Ovary (tissue), 10 donors: ENCODE measurements at regions of chr9 and their contacts with region 1.

Region 1: DNA sequence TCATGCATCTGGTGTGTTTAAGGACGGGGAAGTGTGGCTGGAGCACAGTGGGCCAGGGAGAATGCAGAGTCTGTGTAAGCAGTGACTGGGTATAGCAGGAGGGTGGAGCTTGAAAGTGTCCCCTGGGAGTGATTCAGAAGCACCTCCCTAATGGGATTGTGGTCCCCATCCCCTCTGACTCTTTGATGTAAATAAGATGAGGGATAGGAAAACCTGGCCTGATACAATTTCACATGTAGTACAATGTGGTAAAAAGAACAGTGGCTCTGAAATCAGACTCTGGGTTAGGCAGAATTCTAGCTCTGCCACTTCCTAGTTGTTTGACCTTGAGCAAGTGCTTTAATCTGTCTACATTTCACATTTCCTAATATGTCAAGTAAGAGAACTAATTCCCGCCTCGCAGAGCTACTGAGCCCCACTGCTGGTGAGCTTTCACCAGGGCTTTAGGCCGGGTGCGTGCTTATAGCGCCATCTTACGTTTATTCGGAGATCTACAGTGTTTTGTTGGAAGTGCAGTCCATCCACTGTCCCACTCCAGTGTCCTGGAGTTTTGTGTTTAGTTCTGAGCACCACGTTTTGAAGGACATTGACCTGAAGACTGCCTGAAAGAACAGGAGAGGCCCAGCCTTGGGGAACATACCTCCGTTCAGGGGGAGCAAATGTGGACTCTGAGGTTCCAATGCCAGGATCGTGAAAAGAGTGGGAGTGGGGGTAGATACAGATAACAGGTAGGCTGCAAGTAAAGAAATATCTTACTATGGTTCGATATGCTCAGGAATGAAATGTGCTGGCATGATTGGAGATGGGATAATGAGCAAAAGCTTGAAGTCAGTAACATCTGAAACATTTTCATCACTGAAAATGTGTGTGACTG is 51.2 kb upstream of the TESK1 start:
- DNase-seq: peak; percentile 67 to 84 (median 75)
- H3K4me3 ChIP-seq: no peak overlapping the region
- H3K27ac ChIP-seq: peak overlapping the region in 1 of 2 donors; percentile 55
- H3K4me1 ChIP-seq: peaks cover 3% of the 10 kb centered on the region
- H3K27me3 ChIP-seq: no peaks in the 10 kb centered on the region
- CTCF ChIP-seq: peak; percentile 82 to 92 (median 89)
- EP300 ChIP-seq: no peak
- POLR2A ChIP-seq: no peak

Region 2: GRCh38 chr9:35476596-35476995 is 77.3 kb before region 1 on chr9:
- intact Hi-C with region 1: loop called in 1 of 4 experiments (anchors 5 kb)
- DNase-seq: no peak
- H3K4me3 ChIP-seq: no peak overlapping the region
- H3K27ac ChIP-seq: no peak overlapping the region
- H3K4me1 ChIP-seq: no peaks in the 10 kb centered on the region
- H3K27me3 ChIP-seq: no peaks in the 10 kb centered on the region
- CTCF ChIP-seq: no peak
- EP300 ChIP-seq: no peak
- POLR2A ChIP-seq: no peak

Region 3: GRCh38 chr9:35489313-35490154 is 64.4 kb before region 1 on chr9 and contains the start of gene RUSC2:
- intact Hi-C with region 1: loop called in 3 of 4 experiments (anchors 2 to 5 kb)
- DNase-seq: peak; percentile 86 to 92 (median 90)
- H3K4me3 ChIP-seq: peak within 1 kb of the TSS; percentile 62
- H3K27ac ChIP-seq: peak within 1 kb of the TSS; percentile 87 to 90
- H3K4me1 ChIP-seq: peaks cover 8% of the 10 kb centered on the region
- H3K27me3 ChIP-seq: no peaks in the 10 kb centered on the region
- CTCF ChIP-seq: peak in 2 of 3 donors; percentile 59 to 62
- EP300 ChIP-seq: no peak
- POLR2A ChIP-seq: peak; percentile 71
- total RNA-seq, gene RUSC2: 13.9 to 41.1 (median 31.7) TPM

Region 4: GRCh38 chr9:35566417-35566816 is 12.5 kb after region 1 on chr9:
- intact Hi-C with region 1: no loop called
- DNase-seq: no peak
- H3K4me3 ChIP-seq: no peak overlapping the region
- H3K27ac ChIP-seq: no peak overlapping the region
- H3K4me1 ChIP-seq: peaks cover 3% of the 10 kb centered on the region
- H3K27me3 ChIP-seq: no peaks in the 10 kb centered on the region
- CTCF ChIP-seq: no peak
- EP300 ChIP-seq: no peak
- POLR2A ChIP-seq: no peak